ENCODE measurements at regions of chr17 and their contacts with region 1.

Region 1: DNA sequence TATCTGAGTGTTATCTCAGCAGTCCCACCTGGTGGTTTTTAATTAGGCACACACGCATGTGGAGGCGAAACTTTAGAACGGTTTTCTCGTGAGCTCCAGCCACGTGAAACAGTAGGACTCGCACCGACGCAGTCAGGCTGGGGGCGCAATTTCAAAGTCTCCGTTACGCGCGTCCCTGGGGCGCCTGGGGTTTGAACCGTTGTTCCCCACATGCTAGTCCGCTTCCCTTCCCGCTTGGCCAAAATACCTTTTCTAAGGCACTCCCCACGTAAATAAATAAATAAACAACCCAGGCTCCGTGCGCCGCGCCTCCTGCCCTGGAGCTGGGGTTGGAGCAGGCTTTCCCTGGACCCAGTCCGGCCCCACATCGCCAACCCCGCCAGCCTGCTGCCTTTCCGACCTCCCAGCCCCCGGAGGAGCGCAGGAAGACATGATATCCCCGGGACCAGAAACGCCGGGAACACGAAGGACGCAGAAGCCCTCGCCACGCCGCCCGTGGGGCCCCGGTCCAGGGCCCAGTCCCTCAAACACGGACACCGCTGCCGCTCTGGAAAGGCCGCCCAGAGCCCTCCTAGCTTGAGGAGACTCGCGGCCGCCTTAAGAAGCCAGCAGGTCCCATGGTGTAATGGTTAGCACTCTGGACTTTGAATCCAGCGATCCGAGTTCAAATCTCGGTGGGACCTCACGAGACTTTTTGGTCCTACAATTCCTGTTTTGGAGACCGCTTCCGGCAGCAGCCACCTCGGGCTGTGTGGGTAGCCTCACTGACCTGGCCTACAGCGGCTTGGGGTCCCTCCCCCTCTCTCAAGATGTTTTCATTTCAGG is 18.2 kb downstream of the GNGT2 start:
- DNase-seq: peak; percentile 79 to 98
- H3K4me3 ChIP-seq: peak overlapping the region; percentile 58 to 76
- H3K27ac ChIP-seq: peak overlapping the region; percentile 92 to 99
- H3K4me1 ChIP-seq: peaks cover 0 to 3% of the 10 kb centered on the region in 2 donors
- H3K27me3 ChIP-seq: no peaks in the 10 kb centered on the region
- CTCF ChIP-seq: peak in 2 of 3 experiments; percentile 8 to 36

Region 2: GRCh38 chr17:48054238-48055185 is 1137.6 kb before region 1 on chr17:
- intact Hi-C with region 1: loop called (anchors 10 kb)
- DNase-seq: no peak
- H3K4me3 ChIP-seq: peak overlapping the region; percentile 37 to 88
- H3K27ac ChIP-seq: peak overlapping the region; percentile 90 to 95
- H3K4me1 ChIP-seq: peaks cover 43 to 62% of the 10 kb centered on the region in 2 donors
- H3K27me3 ChIP-seq: no peaks in the 10 kb centered on the region
- CTCF ChIP-seq: no peak

Region 3: GRCh38 chr17:49063652-49064051 is 128.5 kb before region 1 on chr17:
- intact Hi-C with region 1: no loop called
- DNase-seq: no peak
- H3K4me3 ChIP-seq: no peak overlapping the region
- H3K27ac ChIP-seq: no peak overlapping the region
- H3K4me1 ChIP-seq: no peaks in the 10 kb centered on the region
- H3K27me3 ChIP-seq: no peaks in the 10 kb centered on the region
- CTCF ChIP-seq: no peak

Region 4: GRCh38 chr17:49414622-49415350 is 222.7 kb after region 1 on chr17 and contains the start of gene PHB1:
- intact Hi-C with region 1: loop called (anchors 10 kb)
- DNase-seq: peak; percentile 89 to 98
- H3K4me3 ChIP-seq: peak within 1 kb of the TSS; percentile 75 to 97
- H3K27ac ChIP-seq: no peak within 1 kb of the TSS
- H3K4me1 ChIP-seq: peaks cover 6 to 8% of the 10 kb centered on the region in 2 donors
- H3K27me3 ChIP-seq: no peaks in the 10 kb centered on the region
- CTCF ChIP-seq: no peak
- total RNA-seq, gene PHB1: 79.6 TPM

Measured in ascending aorta (tissue), 2 donors.